Activated B cell treated with CpG ODN at 0.5 μM for 24 hours (primary cell): ENCODE measurements at regions of chr17 and their contacts with region 1.

Region 1: GRCh38 chr17:57955183-57955931 is at the start of gene CUEDC1:
- DNase-seq: peak; percentile 62
- ATAC-seq: peak; percentile 76
- H3K4me3 Mint-ChIP-seq: peak within 1 kb of the TSS; percentile 72
- H3K27ac Mint-ChIP-seq: no peak within 1 kb of the TSS
- H3K4me1 Mint-ChIP-seq: peaks cover 32% of the 10 kb centered on the region
- H3K27me3 Mint-ChIP-seq: peaks cover 64% of the 10 kb centered on the region
- CTCF ChIP-seq: no peak
- total RNA-seq, gene CUEDC1: not detected in 2 replicates

Region 2: GRCh38 chr17:57889892-57890856 is 65.2 kb before region 1 on chr17:
- CTCF ChIA-PET with region 1: no interaction called
- POLR2A ChIA-PET with region 1: no interaction called
- intact Hi-C with region 1: no loop called
- DNase-seq: no peak
- ATAC-seq: no peak
- H3K4me3 Mint-ChIP-seq: no peak overlapping the region
- H3K27ac Mint-ChIP-seq: no peak overlapping the region
- H3K4me1 Mint-ChIP-seq: no peaks in the 10 kb centered on the region
- H3K27me3 Mint-ChIP-seq: peaks cover 35% of the 10 kb centered on the region
- CTCF ChIP-seq: no peak

Region 3: GRCh38 chr17:57916925-57917858 is 38.2 kb before region 1 on chr17:
- CTCF ChIA-PET with region 1: no interaction called
- POLR2A ChIA-PET with region 1: no interaction called
- intact Hi-C with region 1: loop called (anchors 2 kb)
- DNase-seq: no peak
- ATAC-seq: peak; percentile 72
- H3K4me3 Mint-ChIP-seq: no peak overlapping the region
- H3K27ac Mint-ChIP-seq: no peak overlapping the region
- H3K4me1 Mint-ChIP-seq: no peaks in the 10 kb centered on the region
- H3K27me3 Mint-ChIP-seq: peaks cover 26% of the 10 kb centered on the region
- CTCF ChIP-seq: no peak

Region 4: DNA sequence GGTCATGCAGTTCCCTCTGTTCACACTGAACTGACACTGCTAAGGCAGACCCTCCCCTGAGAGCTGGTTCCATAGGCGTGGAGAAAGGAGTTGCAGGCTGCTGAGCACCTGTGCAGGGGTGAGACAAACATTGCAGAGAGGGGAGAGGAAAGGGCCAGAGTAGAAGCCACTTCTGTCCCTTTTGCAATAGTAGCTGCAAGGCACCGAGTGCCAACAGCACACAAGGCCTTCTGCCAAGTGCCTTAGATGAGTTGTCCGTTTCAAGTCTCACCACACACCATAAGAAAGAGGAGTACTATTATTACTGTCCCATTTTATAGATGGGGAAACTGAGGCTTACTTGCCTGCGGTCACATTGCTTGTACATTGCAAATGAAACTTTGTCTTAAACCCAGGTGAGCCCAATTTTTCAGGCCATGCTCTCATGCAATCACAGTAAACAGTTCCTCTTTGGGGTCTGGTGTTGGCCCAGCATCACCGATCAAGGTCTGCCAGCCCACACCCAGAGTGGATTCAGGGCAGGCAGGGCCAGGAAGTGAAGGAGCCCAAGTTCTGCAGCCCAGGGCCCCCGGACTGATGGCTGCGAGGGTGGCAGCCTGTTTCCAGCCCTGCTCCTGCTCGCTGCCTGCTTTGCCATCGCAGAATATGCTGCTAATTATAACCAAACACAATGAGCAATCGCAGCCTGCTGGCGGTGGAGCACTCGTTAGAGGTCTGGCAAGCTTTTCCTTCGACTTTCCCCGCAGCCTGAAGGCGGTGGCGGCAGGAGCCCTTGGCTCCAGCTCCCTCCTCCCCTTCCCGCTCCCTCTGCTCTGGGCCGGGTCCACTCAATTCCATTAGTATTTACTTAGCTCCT is 91.1 kb after region 1 on chr17:
- CTCF ChIA-PET with region 1: no interaction called
- POLR2A ChIA-PET with region 1: no interaction called
- intact Hi-C with region 1: no loop called
- DNase-seq: no peak
- ATAC-seq: no peak
- H3K4me3 Mint-ChIP-seq: no peak overlapping the region
- H3K27ac Mint-ChIP-seq: no peak overlapping the region
- H3K4me1 Mint-ChIP-seq: no peaks in the 10 kb centered on the region
- H3K27me3 Mint-ChIP-seq: peaks cover 31% of the 10 kb centered on the region
- CTCF ChIP-seq: no peak

Region 5: GRCh38 chr17:58156839-58157803 is 201.8 kb after region 1 on chr17:
- CTCF ChIA-PET with region 1: no interaction called
- POLR2A ChIA-PET with region 1: no interaction called
- intact Hi-C with region 1: no loop called
- DNase-seq: no peak
- ATAC-seq: peak; percentile 31
- H3K4me3 Mint-ChIP-seq: peak overlapping the region; percentile 79
- H3K27ac Mint-ChIP-seq: no peak overlapping the region
- H3K4me1 Mint-ChIP-seq: peaks cover 24% of the 10 kb centered on the region
- H3K27me3 Mint-ChIP-seq: peaks cover 37% of the 10 kb centered on the region
- CTCF ChIP-seq: no peak

Region 6: GRCh38 chr17:58391302-58391984 is 436.1 kb after region 1 on chr17:
- CTCF ChIA-PET with region 1: no interaction called
- POLR2A ChIA-PET with region 1: no interaction called
- intact Hi-C with region 1: no loop called
- DNase-seq: no peak
- ATAC-seq: no peak
- H3K4me3 Mint-ChIP-seq: no peak overlapping the region
- H3K27ac Mint-ChIP-seq: no peak overlapping the region
- H3K4me1 Mint-ChIP-seq: no peaks in the 10 kb centered on the region
- H3K27me3 Mint-ChIP-seq: no peaks in the 10 kb centered on the region
- CTCF ChIP-seq: no peak